Transverse colon (tissue), 4 donors: ENCODE measurements at regions of chr1 and their contacts with region 1.

Region 1: GRCh38 chr1:198088360-198089071 is 68.3 kb upstream of the NEK7 start:
- DNase-seq: no peak
- H3K4me3 ChIP-seq: no peak overlapping the region
- H3K27ac ChIP-seq: no peak overlapping the region
- H3K4me1 ChIP-seq: no peaks in the 10 kb centered on the region
- H3K27me3 ChIP-seq: no peaks in the 10 kb centered on the region
- CTCF ChIP-seq: peak in 4 of 5 experiments; percentile 42 to 50 (median 48)
- EP300 ChIP-seq: no peak
- POLR2A ChIP-seq: no peak

Region 2: GRCh38 chr1:198465201-198466144 is 377.0 kb after region 1 on chr1:
- in situ Hi-C with region 1: loop called (anchors 10 to 25 kb)
- intact Hi-C with region 1: no loop called
- DNase-seq: no peak
- H3K4me3 ChIP-seq: no peak overlapping the region
- H3K27ac ChIP-seq: no peak overlapping the region
- H3K4me1 ChIP-seq: peaks cover 0 to 6% (median 0%) of the 10 kb centered on the region in 4 donors
- H3K27me3 ChIP-seq: no peaks in the 10 kb centered on the region
- CTCF ChIP-seq: peak; percentile 49 to 56 (median 52)
- EP300 ChIP-seq: no peak
- POLR2A ChIP-seq: no peak